ENCODE measurements at regions of chr19 and their contacts with region 1.

Region 1: GRCh38 chr19:40750059-40750873 is at the start of gene ACTMAP:
- DNase-seq: peak; percentile 95 to 100 (median 100)
- ATAC-seq: peak; percentile 93
- H3K4me3 ChIP-seq: peak within 1 kb of the TSS; percentile 96
- H3K4me3 Mint-ChIP-seq: peak within 1 kb of the TSS; percentile 93 to 100 (median 96)
- H3K27ac ChIP-seq: peak within 1 kb of the TSS; percentile 84
- H3K27ac Mint-ChIP-seq: peak within 1 kb of the TSS; percentile 90 to 99 (median 98)
- H3K4me1 ChIP-seq: peaks cover 11 to 27% of the 10 kb centered on the region in 2 donors
- H3K4me1 Mint-ChIP-seq: peaks cover 31 to 43% (median 42%) of the 10 kb centered on the region in 7 donors
- H3K27me3 ChIP-seq: no peaks in the 10 kb centered on the region
- H3K27me3 Mint-ChIP-seq: no peaks in the 10 kb centered on the region
- total RNA-seq, gene ACTMAP: 5.5 to 13.7 (median 7.8) TPM

Region 2: GRCh38 chr19:40465557-40466150 is 284.6 kb before region 1 on chr19 and contains the start of gene BLVRB:
- CTCF ChIA-PET with region 1: no interaction called
- POLR2A ChIA-PET with region 1: no interaction called
- intact Hi-C with region 1: loop called in 1 of 2 experiments (anchors 1 kb)
- DNase-seq: peak; percentile 98 to 100 (median 99)
- ATAC-seq: peak; percentile 90
- H3K4me3 ChIP-seq: peak within 1 kb of the TSS; percentile 44
- H3K4me3 Mint-ChIP-seq: peak within 1 kb of the TSS; percentile 83 to 95 (median 86)
- H3K27ac ChIP-seq: peak within 1 kb of the TSS; percentile 66
- H3K27ac Mint-ChIP-seq: peak within 1 kb of the TSS; percentile 70 to 94 (median 87)
- H3K4me1 ChIP-seq: peaks cover 0 to 7% of the 10 kb centered on the region in 2 donors
- H3K4me1 Mint-ChIP-seq: peaks cover 18 to 27% (median 25%) of the 10 kb centered on the region in 7 donors
- H3K27me3 ChIP-seq: peaks cover 3 to 4% of the 10 kb centered on the region in 2 donors
- H3K27me3 Mint-ChIP-seq: peaks cover 6 to 28% (median 7%) of the 10 kb centered on the region in 5 donors
- total RNA-seq, gene BLVRB: 11.0 to 42.2 (median 13.3) TPM

Region 3: DNA sequence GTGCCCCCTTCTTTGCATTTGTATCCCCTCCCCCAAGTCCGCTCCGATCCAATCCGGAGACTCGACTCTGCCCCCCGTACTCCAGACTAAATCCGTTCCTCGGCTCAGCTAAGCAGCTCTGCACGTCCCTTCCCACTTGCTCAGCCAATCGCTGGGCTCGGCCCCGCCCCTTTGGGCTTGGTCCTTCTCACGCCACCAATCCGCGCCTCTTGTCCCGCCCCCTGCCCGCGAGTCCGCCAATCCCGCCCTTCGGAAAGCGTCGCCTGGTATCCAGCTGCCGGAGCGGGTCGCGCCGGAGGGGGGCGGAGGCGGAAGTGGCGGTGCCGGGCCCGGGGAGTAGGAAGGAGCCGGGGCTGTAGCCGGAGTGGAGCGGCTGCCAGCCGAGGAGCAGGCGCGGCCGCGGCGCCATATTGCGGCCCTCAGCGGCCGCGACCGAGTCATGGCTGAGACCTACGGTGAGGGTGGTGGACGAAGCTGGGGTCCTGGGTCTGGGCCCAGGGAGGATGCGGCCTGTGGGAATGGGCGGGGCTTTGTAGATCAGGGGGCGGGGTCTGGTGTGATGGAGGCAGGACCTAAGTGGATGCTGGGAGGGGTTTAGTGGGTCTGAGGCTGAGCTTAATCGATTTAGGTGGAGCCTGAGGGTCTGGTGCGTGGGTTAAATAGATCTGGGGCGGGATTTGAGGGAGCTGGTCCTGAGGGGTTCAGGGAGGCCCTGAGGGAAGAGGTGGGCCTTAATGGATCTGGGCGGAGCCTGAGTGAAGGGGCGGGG is 27.9 kb after region 1 on chr19 and contains the start of gene RAB4B:
- CTCF ChIA-PET with region 1: interaction called, 8 read pairs
- POLR2A ChIA-PET with region 1: interaction called, 92 read pairs
- intact Hi-C with region 1: loop called (anchors 1 kb)
- DNase-seq: peak; percentile 99 to 100 (median 100)
- ATAC-seq: peak; percentile 92
- H3K4me3 ChIP-seq: peak within 1 kb of the TSS; percentile 97
- H3K4me3 Mint-ChIP-seq: peak within 1 kb of the TSS; percentile 91 to 99 (median 96)
- H3K27ac ChIP-seq: peak within 1 kb of the TSS; percentile 92
- H3K27ac Mint-ChIP-seq: peak within 1 kb of the TSS; percentile 87 to 99 (median 98)
- H3K4me1 ChIP-seq: peaks cover 18 to 24% of the 10 kb centered on the region in 2 donors
- H3K4me1 Mint-ChIP-seq: peaks cover 31 to 49% (median 39%) of the 10 kb centered on the region in 7 donors
- H3K27me3 ChIP-seq: no peaks in the 10 kb centered on the region
- H3K27me3 Mint-ChIP-seq: no peaks in the 10 kb centered on the region
- total RNA-seq, gene RAB4B: 37.6 to 63.0 (median 52.5) TPM

Region 4: DNA sequence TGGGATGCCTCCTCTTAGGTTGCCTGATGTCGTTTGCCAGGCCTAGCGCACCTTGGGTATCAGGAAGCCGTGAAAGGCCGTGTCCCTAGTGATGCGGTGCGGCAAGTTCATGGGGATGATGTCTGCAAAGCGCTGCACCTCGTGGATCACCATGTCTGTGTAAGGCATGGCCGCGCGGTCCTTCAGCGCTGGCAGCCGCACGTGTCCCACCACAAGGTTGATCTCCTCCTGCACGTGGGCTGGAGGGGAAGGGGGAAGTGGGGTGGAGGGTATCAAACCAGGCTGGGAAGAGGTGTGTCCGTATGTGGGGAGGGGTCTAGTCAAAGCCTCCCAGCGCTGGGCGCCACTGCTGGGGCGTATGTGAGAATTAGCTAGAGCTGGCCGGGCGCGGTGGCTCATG is 71.9 kb after region 1 on chr19:
- CTCF ChIA-PET with region 1: interaction called, 9 read pairs
- POLR2A ChIA-PET with region 1: interaction called, 4 read pairs
- intact Hi-C with region 1: loop called in 1 of 2 experiments (anchors 1 kb)
- DNase-seq: no peak
- ATAC-seq: no peak
- H3K4me3 ChIP-seq: no peak overlapping the region
- H3K4me3 Mint-ChIP-seq: no peak overlapping the region
- H3K27ac ChIP-seq: no peak overlapping the region
- H3K27ac Mint-ChIP-seq: peak overlapping the region in 3 of 9 donors; percentile 51 to 78 (median 62)
- H3K4me1 ChIP-seq: peaks cover 16 to 27% of the 10 kb centered on the region in 2 donors
- H3K4me1 Mint-ChIP-seq: peaks cover 36 to 58% (median 44%) of the 10 kb centered on the region in 7 donors
- H3K27me3 ChIP-seq: no peaks in the 10 kb centered on the region
- H3K27me3 Mint-ChIP-seq: no peaks in the 10 kb centered on the region

Region 5: GRCh38 chr19:40872209-40872608 is 121.9 kb after region 1 on chr19:
- CTCF ChIA-PET with region 1: no interaction called
- POLR2A ChIA-PET with region 1: no interaction called
- intact Hi-C with region 1: no loop called
- DNase-seq: no peak
- ATAC-seq: no peak
- H3K4me3 ChIP-seq: no peak overlapping the region
- H3K4me3 Mint-ChIP-seq: no peak overlapping the region
- H3K27ac ChIP-seq: no peak overlapping the region
- H3K27ac Mint-ChIP-seq: no peak overlapping the region
- H3K4me1 ChIP-seq: peaks cover 0 to 9% of the 10 kb centered on the region in 2 donors
- H3K4me1 Mint-ChIP-seq: peaks cover 10 to 19% (median 14%) of the 10 kb centered on the region in 7 donors
- H3K27me3 ChIP-seq: no peaks in the 10 kb centered on the region
- H3K27me3 Mint-ChIP-seq: peaks cover 0 to 58% (median 7%) of the 10 kb centered on the region in 5 donors

Region 6: GRCh38 chr19:41363753-41364523 is 613.7 kb after region 1 on chr19 and contains the start of gene B9D2:
- CTCF ChIA-PET with region 1: no interaction called
- POLR2A ChIA-PET with region 1: interaction called, 7 read pairs
- intact Hi-C with region 1: loop called in 1 of 2 experiments (anchors 1 kb)
- DNase-seq: peak; percentile 91 to 99 (median 98)
- ATAC-seq: peak; percentile 96
- H3K4me3 ChIP-seq: peak within 1 kb of the TSS; percentile 98
- H3K4me3 Mint-ChIP-seq: peak within 1 kb of the TSS; percentile 82 to 100 (median 98)
- H3K27ac ChIP-seq: peak within 1 kb of the TSS; percentile 99
- H3K27ac Mint-ChIP-seq: peak within 1 kb of the TSS; percentile 96 to 100 (median 99)
- H3K4me1 ChIP-seq: peaks cover 15 to 21% of the 10 kb centered on the region in 2 donors
- H3K4me1 Mint-ChIP-seq: peaks cover 14 to 51% (median 41%) of the 10 kb centered on the region in 7 donors
- H3K27me3 ChIP-seq: no peaks in the 10 kb centered on the region
- H3K27me3 Mint-ChIP-seq: no peaks in the 10 kb centered on the region
- total RNA-seq, gene B9D2: 11.6 to 38.9 (median 12.5) TPM

Measured in naive thymus-derived CD4-positive, alpha-beta T cell (primary cell).